ENCODE measurements at regions of chr11 and their contacts with region 1.

Region 1: GRCh38 chr11:78416305-78417178 is 1.1 kb downstream of the GAB2 start:
- DNase-seq: peak; percentile 23
- H3K4me3 ChIP-seq: peak overlapping the region; percentile 53 to 95 (median 84)
- H3K27ac ChIP-seq: peak overlapping the region; percentile 86 to 99 (median 96)
- H3K4me1 ChIP-seq: peaks cover 11 to 58% (median 17%) of the 10 kb centered on the region in 3 donors
- H3K27me3 ChIP-seq: no peaks in the 10 kb centered on the region
- CTCF ChIP-seq: peak in 5 of 6 experiments; percentile 24 to 65 (median 27)
- POLR2A ChIP-seq: peak in 2 of 4 donors; percentile 79 to 87

Region 2: GRCh38 chr11:78228467-78228866 is 188.1 kb before region 1 on chr11:
- intact Hi-C with region 1: loop called (anchors 10 kb)
- DNase-seq: no peak
- H3K4me3 ChIP-seq: no peak overlapping the region
- H3K27ac ChIP-seq: no peak overlapping the region
- H3K4me1 ChIP-seq: peaks cover 0 to 33% (median 4%) of the 10 kb centered on the region in 3 donors
- H3K27me3 ChIP-seq: no peaks in the 10 kb centered on the region
- CTCF ChIP-seq: peak; percentile 17 to 62 (median 52)
- POLR2A ChIP-seq: no peak

Region 3: GRCh38 chr11:78698612-78699011 is 282.1 kb after region 1 on chr11:
- intact Hi-C with region 1: no loop called
- DNase-seq: no peak
- H3K4me3 ChIP-seq: no peak overlapping the region
- H3K27ac ChIP-seq: no peak overlapping the region
- H3K4me1 ChIP-seq: peaks cover 0 to 6% (median 0%) of the 10 kb centered on the region in 3 donors
- H3K27me3 ChIP-seq: no peaks in the 10 kb centered on the region
- CTCF ChIP-seq: no peak
- POLR2A ChIP-seq: no peak